Right lobe of liver (tissue), 6 donors: ENCODE measurements at regions of chr2 and their contacts with region 1.

Region 1: GRCh38 chr2:120352701-120353590 is 7.0 kb downstream of the INHBB start:
- DNase-seq: no peak
- ATAC-seq: no peak
- H3K4me3 ChIP-seq: no peak overlapping the region
- H3K27ac ChIP-seq: no peak overlapping the region
- H3K4me1 ChIP-seq: peaks cover 0 to 5% (median 2%) of the 10 kb centered on the region in 4 donors
- H3K27me3 ChIP-seq: no peaks in the 10 kb centered on the region
- CTCF ChIP-seq: no peak
- POLR2A ChIP-seq: no peak

Region 2: GRCh38 chr2:119795309-119796303 is 557.3 kb before region 1 on chr2:
- intact Hi-C with region 1: no loop called
- DNase-seq: no peak
- ATAC-seq: no peak
- H3K4me3 ChIP-seq: no peak overlapping the region
- H3K27ac ChIP-seq: no peak overlapping the region
- H3K4me1 ChIP-seq: no peaks in the 10 kb centered on the region
- H3K27me3 ChIP-seq: no peaks in the 10 kb centered on the region
- CTCF ChIP-seq: no peak
- POLR2A ChIP-seq: no peak

Region 3: DNA sequence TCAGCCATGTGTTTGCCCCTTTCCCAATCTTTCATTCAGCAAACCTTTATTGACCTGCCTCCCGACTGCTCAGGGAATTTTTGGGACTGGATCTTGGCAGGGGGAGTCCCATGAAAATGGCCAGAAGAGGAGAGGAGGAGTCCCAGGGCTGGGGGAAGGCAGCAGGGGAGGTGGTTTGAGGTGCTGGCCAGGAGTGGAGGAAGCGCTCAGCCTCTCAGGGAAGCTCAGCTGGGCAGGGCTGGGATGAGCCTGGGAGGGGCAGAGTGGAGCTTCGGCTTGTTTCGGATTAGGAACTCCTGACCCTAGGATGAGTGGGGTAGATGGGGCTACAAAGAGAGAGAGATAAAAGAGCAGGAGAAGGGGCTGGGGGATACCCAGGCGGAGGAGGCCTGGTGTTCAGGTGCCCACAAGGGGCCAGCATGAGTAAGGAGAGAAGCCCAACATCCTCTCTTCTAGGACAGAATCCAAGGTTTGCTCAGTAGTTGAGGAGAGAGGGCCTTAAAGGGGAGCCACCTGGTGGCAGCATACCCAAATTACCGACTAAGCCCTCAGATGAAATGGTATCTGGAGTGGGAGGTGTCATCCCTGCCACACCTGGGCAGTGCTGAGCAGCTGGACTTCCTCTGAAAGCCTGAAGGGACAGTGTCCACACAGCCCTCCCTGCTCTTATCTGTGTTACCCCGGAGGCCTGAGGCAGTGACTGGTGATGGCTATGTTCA is 84.1 kb after region 1 on chr2:
- intact Hi-C with region 1: loop called in 1 of 2 experiments (anchors 10 kb)
- DNase-seq: peak in 1 of 3 donors; percentile 29
- ATAC-seq: peak; percentile 73 to 86 (median 83)
- H3K4me3 ChIP-seq: no peak overlapping the region
- H3K27ac ChIP-seq: no peak overlapping the region
- H3K4me1 ChIP-seq: peaks cover 0 to 4% (median under 1%) of the 10 kb centered on the region in 4 donors
- H3K27me3 ChIP-seq: no peaks in the 10 kb centered on the region
- CTCF ChIP-seq: peak; percentile 49 to 67 (median 61)
- POLR2A ChIP-seq: no peak